MCF 10A (cell line): ENCODE measurements at regions of chr2 and their contacts with region 1.

Region 1: GRCh38 chr2:173090276-173090877 is 14.7 kb downstream of the MAP3K20 start:
- DNase-seq: no peak
- H3K4me3 Mint-ChIP-seq: peak overlapping the region; percentile 24
- H3K27ac Mint-ChIP-seq: peak overlapping the region; percentile 65
- H3K4me1 Mint-ChIP-seq: peaks cover 18% of the 10 kb centered on the region
- H3K27me3 Mint-ChIP-seq: no peaks in the 10 kb centered on the region
- CTCF ChIP-seq: no peak

Region 2: DNA sequence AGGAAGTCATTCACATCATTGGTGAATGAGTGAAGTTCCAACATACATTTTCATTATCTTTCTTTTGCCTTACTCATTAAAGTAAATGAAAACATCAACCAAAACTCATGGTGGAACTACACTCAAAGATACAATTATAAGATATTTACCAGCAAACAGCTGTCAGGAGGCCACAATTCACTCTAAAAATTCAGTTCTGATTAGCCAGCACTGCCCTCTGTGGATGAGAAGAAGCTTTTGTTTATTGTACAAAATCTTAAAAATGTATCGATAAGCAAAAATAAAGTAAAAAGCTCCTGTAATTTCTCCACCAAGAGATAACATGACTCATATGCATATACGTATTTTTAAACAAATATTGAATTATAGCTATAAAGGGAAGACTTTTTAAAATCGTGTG is 428.3 kb before region 1 on chr2:
- CTCF ChIA-PET with region 1: no interaction called
- POLR2A ChIA-PET with region 1: no interaction called
- intact Hi-C with region 1: no loop called
- DNase-seq: no peak
- H3K4me3 Mint-ChIP-seq: no peak overlapping the region
- H3K27ac Mint-ChIP-seq: no peak overlapping the region
- H3K4me1 Mint-ChIP-seq: peaks cover 15% of the 10 kb centered on the region
- H3K27me3 Mint-ChIP-seq: no peaks in the 10 kb centered on the region
- CTCF ChIP-seq: no peak

Region 3: GRCh38 chr2:173119069-173119807 is 28.9 kb after region 1 on chr2:
- CTCF ChIA-PET with region 1: interaction called, 5 read pairs
- POLR2A ChIA-PET with region 1: interaction called, 20 read pairs
- intact Hi-C with region 1: no loop called
- DNase-seq: peak; percentile 36
- H3K4me3 Mint-ChIP-seq: no peak overlapping the region
- H3K27ac Mint-ChIP-seq: peak overlapping the region; percentile 96
- H3K4me1 Mint-ChIP-seq: peaks cover 50% of the 10 kb centered on the region
- H3K27me3 Mint-ChIP-seq: no peaks in the 10 kb centered on the region
- CTCF ChIP-seq: no peak

Region 4: GRCh38 chr2:173326806-173327205 is 236.4 kb after region 1 on chr2:
- CTCF ChIA-PET with region 1: no interaction called
- POLR2A ChIA-PET with region 1: no interaction called
- intact Hi-C with region 1: no loop called
- DNase-seq: no peak
- H3K4me3 Mint-ChIP-seq: no peak overlapping the region
- H3K27ac Mint-ChIP-seq: no peak overlapping the region
- H3K4me1 Mint-ChIP-seq: no peaks in the 10 kb centered on the region
- H3K27me3 Mint-ChIP-seq: no peaks in the 10 kb centered on the region
- CTCF ChIP-seq: no peak